Activated CD8-positive, alpha-beta T cell treated with anti-CD3 and anti-CD28 coated beads for 36 hours (primary cell): ENCODE measurements at regions of chr17 and their contacts with region 1.

Region 1: DNA sequence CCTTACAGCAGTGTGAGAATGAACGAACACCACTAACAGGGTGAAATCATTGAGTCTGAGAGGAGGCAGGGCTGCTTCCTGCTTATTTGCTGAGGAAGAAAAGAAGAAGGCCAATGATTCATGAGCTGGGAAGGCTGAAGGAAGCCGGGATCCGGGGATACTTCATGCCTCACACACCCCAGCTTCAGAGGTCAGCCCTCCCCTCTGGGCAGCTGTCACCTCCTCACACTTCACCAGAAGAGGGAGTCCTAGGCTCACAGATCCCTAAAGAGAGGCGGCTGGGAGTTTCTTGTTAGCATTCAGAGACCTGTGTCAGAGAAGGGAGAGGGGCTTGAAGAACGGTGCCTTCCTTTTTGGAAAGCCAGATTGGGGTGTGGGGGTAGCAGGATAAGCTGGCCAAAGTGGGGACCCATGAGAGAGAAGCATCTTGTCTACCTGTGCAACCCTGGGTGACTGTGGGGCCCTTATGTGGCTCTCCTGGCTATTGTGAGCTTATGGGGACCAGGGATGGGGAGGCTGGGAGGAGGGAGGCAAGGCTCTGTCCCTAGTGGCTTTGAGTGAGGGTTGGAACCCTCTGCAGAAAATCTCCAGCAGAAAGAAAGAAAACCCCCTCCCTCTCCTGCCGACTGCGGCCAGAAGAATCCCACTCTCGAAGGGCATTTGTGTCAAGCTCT is 94.6 kb downstream of the RGS9 start:
- DNase-seq: peak; percentile 66
- ATAC-seq: no peak
- H3K4me3 Mint-ChIP-seq: no peak overlapping the region
- H3K27ac Mint-ChIP-seq: no peak overlapping the region
- H3K4me1 Mint-ChIP-seq: peaks cover 24% of the 10 kb centered on the region
- H3K27me3 Mint-ChIP-seq: peaks cover 12% of the 10 kb centered on the region
- CTCF ChIP-seq: peak; percentile 68

Region 2: DNA sequence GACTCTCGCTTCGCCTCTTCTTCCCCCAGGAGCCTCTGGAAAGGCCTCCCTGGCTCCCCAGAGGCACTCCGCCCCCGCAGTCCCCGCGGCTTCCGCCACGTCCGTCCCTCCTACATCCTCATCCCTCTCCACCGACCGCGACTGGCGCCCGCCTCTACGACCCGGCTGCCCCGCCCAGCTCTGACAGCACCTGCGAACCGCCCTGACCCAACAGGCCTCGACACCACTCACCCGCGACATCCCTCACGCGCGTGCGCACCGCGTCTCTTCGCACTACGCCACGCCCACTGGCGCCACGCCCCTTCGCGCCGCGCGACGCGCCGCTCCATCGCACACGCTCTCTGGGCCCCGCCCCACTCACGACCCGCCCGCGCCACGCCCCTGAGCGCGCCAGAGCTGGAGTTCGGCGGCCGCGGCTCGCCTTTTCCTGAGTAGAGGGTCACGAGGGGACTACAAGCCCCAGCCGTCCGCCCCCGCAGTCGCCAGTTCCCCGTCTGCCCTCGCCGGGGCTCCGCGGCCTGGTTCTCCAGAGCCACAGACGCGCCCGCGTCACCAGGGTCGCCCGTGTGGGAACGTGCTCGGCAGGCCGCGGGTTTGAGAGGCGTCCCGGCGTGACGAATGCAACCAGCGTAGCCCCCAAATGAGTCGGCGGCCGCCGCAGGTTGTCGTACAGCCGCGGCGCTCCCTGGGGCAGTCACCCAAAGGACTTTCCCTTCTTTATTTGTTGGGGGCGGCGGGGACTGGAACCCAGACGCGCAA is 256.3 kb before region 1 on chr17:
- CTCF ChIA-PET with region 1: no interaction called
- POLR2A ChIA-PET with region 1: interaction called, 5 read pairs
- intact Hi-C with region 1: loop called (anchors 1 kb)
- DNase-seq: peak; percentile 97
- ATAC-seq: peak; percentile 78
- H3K4me3 Mint-ChIP-seq: peak overlapping the region; percentile 88
- H3K27ac Mint-ChIP-seq: peak overlapping the region; percentile 99
- H3K4me1 Mint-ChIP-seq: peaks cover 50% of the 10 kb centered on the region
- H3K27me3 Mint-ChIP-seq: no peaks in the 10 kb centered on the region
- CTCF ChIP-seq: no peak

Region 3: GRCh38 chr17:65219124-65219523 is 12.7 kb before region 1 on chr17:
- CTCF ChIA-PET with region 1: interaction called, 14 read pairs
- POLR2A ChIA-PET with region 1: no interaction called
- intact Hi-C with region 1: no loop called
- DNase-seq: no peak
- ATAC-seq: no peak
- H3K4me3 Mint-ChIP-seq: no peak overlapping the region
- H3K27ac Mint-ChIP-seq: no peak overlapping the region
- H3K4me1 Mint-ChIP-seq: no peaks in the 10 kb centered on the region
- H3K27me3 Mint-ChIP-seq: peaks cover 12% of the 10 kb centered on the region
- CTCF ChIP-seq: no peak

Region 4: DNA sequence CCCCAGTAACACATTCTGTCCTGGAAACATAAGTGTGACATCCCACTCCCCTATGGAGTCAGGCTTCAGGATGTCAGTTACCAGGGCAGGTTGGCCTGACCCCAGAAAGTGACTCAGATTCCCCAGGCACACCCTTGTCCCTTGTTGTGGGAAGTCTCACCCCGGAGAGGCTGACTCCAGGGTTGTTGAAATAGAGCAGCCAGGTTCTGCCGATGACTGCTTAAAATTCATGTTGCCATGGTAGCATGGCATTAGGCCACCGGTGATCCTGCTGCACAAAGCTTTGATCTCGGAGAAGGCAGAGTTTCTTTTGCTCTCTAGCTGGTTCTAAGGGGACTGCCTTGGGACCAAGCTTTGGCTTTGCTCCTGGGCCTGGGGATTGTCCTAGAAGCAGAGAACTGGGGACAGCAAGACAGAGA is 12.0 kb after region 1 on chr17:
- CTCF ChIA-PET with region 1: interaction called, 14 read pairs
- POLR2A ChIA-PET with region 1: interaction called, 5 read pairs
- intact Hi-C with region 1: no loop called
- DNase-seq: peak; percentile 42
- ATAC-seq: peak; percentile 82
- H3K4me3 Mint-ChIP-seq: no peak overlapping the region
- H3K27ac Mint-ChIP-seq: no peak overlapping the region
- H3K4me1 Mint-ChIP-seq: peaks cover 9% of the 10 kb centered on the region
- H3K27me3 Mint-ChIP-seq: peaks cover 7% of the 10 kb centered on the region
- CTCF ChIP-seq: no peak

Region 5: GRCh38 chr17:65261682-65262636 is 30.2 kb after region 1 on chr17:
- CTCF ChIA-PET with region 1: interaction called, 11 read pairs
- POLR2A ChIA-PET with region 1: interaction called, 3 read pairs
- intact Hi-C with region 1: no loop called
- DNase-seq: no peak
- ATAC-seq: peak; percentile 79
- H3K4me3 Mint-ChIP-seq: no peak overlapping the region
- H3K27ac Mint-ChIP-seq: peak overlapping the region; percentile 14
- H3K4me1 Mint-ChIP-seq: peaks cover 19% of the 10 kb centered on the region
- H3K27me3 Mint-ChIP-seq: peaks cover 2% of the 10 kb centered on the region
- CTCF ChIP-seq: no peak

Region 6: GRCh38 chr17:65556014-65556909 is 324.5 kb after region 1 on chr17:
- CTCF ChIA-PET with region 1: interaction called, 27 read pairs
- POLR2A ChIA-PET with region 1: no interaction called
- intact Hi-C with region 1: loop called (anchors 10 kb)
- DNase-seq: peak; percentile 94
- ATAC-seq: peak; percentile 46
- H3K4me3 Mint-ChIP-seq: no peak overlapping the region
- H3K27ac Mint-ChIP-seq: no peak overlapping the region
- H3K4me1 Mint-ChIP-seq: peaks cover 21% of the 10 kb centered on the region
- H3K27me3 Mint-ChIP-seq: peaks cover 4% of the 10 kb centered on the region
- CTCF ChIP-seq: peak; percentile 84

Region 7: DNA sequence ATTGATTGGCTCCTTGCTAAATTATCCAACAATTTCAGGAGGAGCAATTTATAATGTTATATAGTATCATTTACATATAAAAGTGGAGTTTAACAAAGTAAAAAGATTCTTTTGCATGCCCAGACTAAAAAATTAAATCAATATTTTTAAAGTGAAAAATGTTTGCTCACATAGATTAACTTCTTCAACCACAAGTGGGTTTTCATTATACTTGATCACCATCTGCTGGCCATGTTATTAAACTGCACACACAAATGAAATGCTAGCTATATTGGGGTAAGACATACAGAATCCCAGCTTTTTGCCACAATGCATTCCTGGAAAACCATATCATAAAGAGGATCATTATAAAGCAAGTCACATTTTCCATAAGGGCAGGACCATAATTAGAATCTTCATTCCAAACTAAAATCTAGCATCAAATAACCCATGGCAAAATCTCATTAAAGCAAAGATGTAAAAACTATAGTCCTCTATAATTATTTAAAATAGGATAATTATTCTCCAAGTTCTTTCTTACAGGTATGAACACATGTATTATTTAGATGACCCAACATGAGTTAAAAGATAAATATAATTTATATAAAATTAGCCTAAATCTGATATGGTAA is 933.8 kb after region 1 on chr17:
- CTCF ChIA-PET with region 1: interaction called, 36 read pairs
- POLR2A ChIA-PET with region 1: no interaction called
- intact Hi-C with region 1: loop called (anchors 10 kb)
- DNase-seq: peak; percentile 6
- ATAC-seq: peak; percentile 47
- H3K4me3 Mint-ChIP-seq: no peak overlapping the region
- H3K27ac Mint-ChIP-seq: no peak overlapping the region
- H3K4me1 Mint-ChIP-seq: peaks cover 8% of the 10 kb centered on the region
- H3K27me3 Mint-ChIP-seq: no peaks in the 10 kb centered on the region
- CTCF ChIP-seq: peak; percentile 84